Posterior vena cava (tissue), 2 donors: ENCODE measurements at regions of chr13 and their contacts with region 1.

Region 1: DNA sequence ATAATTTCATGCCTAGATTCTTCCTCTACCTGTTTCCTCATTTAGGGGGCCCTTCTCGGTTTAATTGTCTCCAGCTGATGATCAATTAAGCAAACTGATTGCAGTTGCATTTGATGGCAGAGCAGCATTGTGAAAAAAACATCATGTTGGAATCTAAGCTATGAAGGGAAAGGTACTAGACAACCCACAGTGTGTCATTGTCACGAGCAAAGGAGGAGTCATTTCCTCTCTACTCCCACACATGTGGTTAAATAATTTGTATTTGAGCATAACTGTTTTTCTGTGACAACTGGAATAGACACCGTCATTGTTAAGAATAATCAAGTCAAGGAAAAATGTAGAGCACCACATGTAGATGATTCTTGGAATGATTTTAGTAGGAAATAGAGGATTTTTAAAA is 240.3 kb downstream of the DCT start:
- DNase-seq: no peak

Region 2: DNA sequence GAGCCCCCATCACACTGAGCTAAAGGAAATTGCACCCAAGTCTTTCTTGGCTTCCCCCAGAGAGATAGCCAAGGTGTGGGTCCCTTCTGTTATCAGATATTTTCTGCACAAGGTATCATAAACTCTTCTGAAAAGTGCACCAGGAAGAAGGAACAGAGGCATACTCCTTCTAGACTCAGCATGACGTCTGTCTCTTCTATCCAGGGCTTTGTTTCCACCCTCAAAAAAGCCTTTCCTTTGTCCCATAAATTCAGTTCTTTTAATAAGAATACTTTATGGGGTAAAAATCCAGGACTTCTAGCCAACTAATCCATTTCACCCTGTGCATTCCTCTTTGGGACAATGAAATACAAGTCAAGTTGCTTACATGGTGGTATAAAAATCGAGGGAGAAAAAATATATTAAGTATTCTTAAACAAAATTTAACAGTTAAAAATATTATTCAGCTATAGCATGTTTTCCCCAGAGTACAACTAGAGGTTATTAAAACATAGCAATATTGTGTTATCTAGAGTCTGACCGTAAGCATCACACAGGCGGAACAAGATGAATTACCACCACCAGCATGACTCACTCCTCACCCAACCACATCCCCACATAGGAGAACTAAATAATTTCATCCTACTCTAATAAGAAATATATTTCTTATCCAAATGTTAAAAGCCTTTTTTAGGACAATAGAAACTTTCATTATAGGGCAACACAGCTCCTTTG is 1092.4 kb before region 1 on chr13:
- intact Hi-C with region 1: loop called in 1 of 2 experiments (anchors 5 kb)
- DNase-seq: no peak

Region 3: DNA sequence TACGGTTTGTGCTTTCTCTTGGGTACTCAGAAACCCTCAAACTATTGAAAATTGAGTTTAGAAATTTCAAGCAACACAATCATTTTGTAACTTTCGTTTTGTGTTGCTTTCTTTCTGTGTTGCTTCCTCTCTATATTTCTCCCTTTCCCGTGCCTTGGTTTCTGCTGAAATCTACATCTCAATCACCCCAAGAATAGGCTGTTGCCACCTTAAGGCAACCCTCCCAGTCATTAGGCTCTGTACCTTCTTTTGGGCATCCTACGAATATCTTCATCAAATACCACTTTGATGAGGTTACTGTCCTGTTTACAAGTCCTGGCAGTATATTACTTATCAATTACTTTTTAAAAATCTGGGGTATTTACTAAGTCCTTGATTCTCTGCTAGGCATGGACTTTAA is 390.9 kb before region 1 on chr13:
- intact Hi-C with region 1: loop called in 1 of 2 experiments (anchors 2 kb)
- DNase-seq: no peak